ENCODE measurements at regions of chr17 and their contacts with region 1.

Region 1: DNA sequence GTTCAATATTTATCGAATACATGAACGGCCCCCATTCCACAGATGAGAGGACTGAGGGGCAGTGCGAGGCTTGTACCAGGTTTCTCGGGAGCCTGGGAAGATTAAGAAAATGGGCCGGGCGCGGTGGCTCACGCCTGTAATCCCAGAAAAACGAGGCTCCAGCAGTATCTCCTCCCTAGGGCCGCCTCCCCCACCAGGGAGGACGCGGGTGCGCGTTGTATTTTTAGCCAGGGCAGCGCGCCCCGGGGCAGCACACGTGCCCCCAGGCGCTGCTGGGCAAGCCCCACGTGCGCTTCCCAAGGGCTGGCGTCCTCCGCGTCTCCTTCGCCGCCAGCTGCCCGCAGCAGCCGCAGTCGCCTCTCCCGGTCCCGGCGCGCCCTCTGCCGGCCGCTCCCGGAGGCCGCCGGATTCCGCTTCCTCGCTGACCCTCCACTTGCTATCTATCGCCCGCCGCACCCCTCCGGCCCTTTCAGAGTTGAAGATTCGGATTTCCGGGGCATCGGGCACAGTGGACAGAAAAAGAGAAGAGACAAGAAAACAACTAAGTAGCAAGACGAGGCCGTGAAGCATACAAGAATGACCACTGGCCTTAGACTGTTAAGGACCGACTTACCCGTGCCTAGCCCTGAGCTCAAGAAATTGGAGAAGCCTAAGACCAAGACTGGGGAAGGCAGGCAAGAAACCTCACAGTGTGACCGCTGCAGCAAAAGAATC is 1.9 kb upstream of the YBX2 start:
- DNase-seq: peak in 7 of 9 experiments; percentile 54 to 82 (median 75)
- ATAC-seq: no peak
- H3K4me3 ChIP-seq: no peak overlapping the region
- H3K4me3 Mint-ChIP-seq: peak overlapping the region; percentile 75
- H3K27ac ChIP-seq: no peak overlapping the region
- H3K27ac Mint-ChIP-seq: no peak overlapping the region
- H3K4me1 ChIP-seq: peaks cover 25% of the 10 kb centered on the region
- H3K4me1 Mint-ChIP-seq: peaks cover 19% of the 10 kb centered on the region
- H3K27me3 ChIP-seq: peaks cover 0 to 15% of the 10 kb centered on the region in 2 experiments
- H3K27me3 Mint-ChIP-seq: peaks cover 9% of the 10 kb centered on the region
- CTCF ChIP-seq: peak; percentile 89

Region 2: DNA sequence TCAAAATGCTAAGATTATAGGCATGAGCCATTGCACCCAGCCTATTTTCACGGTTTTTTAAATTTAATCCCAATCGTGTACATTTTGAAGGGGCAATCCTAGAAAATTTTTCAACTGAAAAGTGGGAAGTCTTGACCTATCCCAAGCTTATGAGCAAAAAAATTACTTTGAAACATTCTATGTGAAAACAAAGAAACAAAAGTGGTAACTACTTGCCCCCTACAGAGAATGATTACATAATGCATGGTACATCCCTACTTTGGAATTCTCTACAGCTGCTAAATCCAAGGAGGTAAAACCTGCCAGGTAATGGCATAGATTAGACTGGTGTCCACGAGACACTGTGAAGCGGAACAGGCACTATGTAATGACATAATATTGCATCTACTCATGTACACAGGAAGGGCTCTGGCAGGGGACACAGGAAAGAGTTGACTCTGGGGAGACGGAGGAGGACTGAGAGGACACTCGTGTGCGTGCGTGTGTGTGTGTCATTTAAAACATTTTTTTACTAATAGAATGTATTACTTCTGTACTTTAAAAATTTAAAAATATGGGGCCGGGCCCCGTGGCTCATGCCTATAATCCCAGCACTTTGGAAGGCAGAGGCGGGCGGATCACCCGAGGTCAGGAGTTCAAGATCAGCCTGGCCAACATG is 197.4 kb before region 1 on chr17:
- CTCF ChIA-PET with region 1: no interaction called
- POLR2A ChIA-PET with region 1: no interaction called
- intact Hi-C with region 1: no loop called
- DNase-seq: no peak
- ATAC-seq: no peak
- H3K4me3 ChIP-seq: no peak overlapping the region
- H3K4me3 Mint-ChIP-seq: no peak overlapping the region
- H3K27ac ChIP-seq: no peak overlapping the region
- H3K27ac Mint-ChIP-seq: no peak overlapping the region
- H3K4me1 ChIP-seq: no peaks in the 10 kb centered on the region
- H3K4me1 Mint-ChIP-seq: peaks cover 11% of the 10 kb centered on the region
- H3K27me3 ChIP-seq: peaks cover 0 to 3% of the 10 kb centered on the region in 2 experiments
- H3K27me3 Mint-ChIP-seq: peaks cover 19% of the 10 kb centered on the region
- CTCF ChIP-seq: no peak

Region 3: GRCh38 chr17:7219812-7220581 is 76.3 kb before region 1 on chr17 and contains the starts of genes ACADVL and DLG4:
- CTCF ChIA-PET with region 1: interaction called, 35 read pairs
- POLR2A ChIA-PET with region 1: no interaction called
- intact Hi-C with region 1: loop called in 1 of 2 experiments (anchors 2 kb)
- DNase-seq: peak in 8 of 9 experiments; percentile 67 to 86 (median 82)
- ATAC-seq: peak; percentile 54
- H3K4me3 ChIP-seq: peak within 1 kb of the TSS; percentile 74 to 97
- H3K4me3 Mint-ChIP-seq: peak within 1 kb of the TSS; percentile 91
- H3K27ac ChIP-seq: peak within 1 kb of the TSS; percentile 35 to 86
- H3K27ac Mint-ChIP-seq: peak within 1 kb of the TSS; percentile 94
- H3K4me1 ChIP-seq: peaks cover 52% of the 10 kb centered on the region
- H3K4me1 Mint-ChIP-seq: peaks cover 55% of the 10 kb centered on the region
- H3K27me3 ChIP-seq: no peaks in the 10 kb centered on the region
- H3K27me3 Mint-ChIP-seq: no peaks in the 10 kb centered on the region
- CTCF ChIP-seq: no peak
- total RNA-seq, gene ACADVL: 264 to 275 TPM
- total RNA-seq, gene DLG4: 5.8 to 8.1 TPM

Region 4: GRCh38 chr17:7252176-7253043 is 43.9 kb before region 1 on chr17 and contains the start of gene ELP5:
- CTCF ChIA-PET with region 1: interaction called, 3 read pairs
- POLR2A ChIA-PET with region 1: interaction called, 3 read pairs
- intact Hi-C with region 1: loop called in 1 of 2 experiments (anchors 1 kb)
- DNase-seq: peak; percentile 73 to 99 (median 87)
- ATAC-seq: peak; percentile 48
- H3K4me3 ChIP-seq: peak within 1 kb of the TSS; percentile 81 to 92
- H3K4me3 Mint-ChIP-seq: peak within 1 kb of the TSS; percentile 97
- H3K27ac ChIP-seq: peak within 1 kb of the TSS; percentile 99
- H3K27ac Mint-ChIP-seq: peak within 1 kb of the TSS; percentile 100
- H3K4me1 ChIP-seq: peaks cover 31% of the 10 kb centered on the region
- H3K4me1 Mint-ChIP-seq: peaks cover 44% of the 10 kb centered on the region
- H3K27me3 ChIP-seq: no peaks in the 10 kb centered on the region
- H3K27me3 Mint-ChIP-seq: no peaks in the 10 kb centered on the region
- CTCF ChIP-seq: no peak
- total RNA-seq, gene ELP5: 38.9 to 39.0 TPM

Region 5: DNA sequence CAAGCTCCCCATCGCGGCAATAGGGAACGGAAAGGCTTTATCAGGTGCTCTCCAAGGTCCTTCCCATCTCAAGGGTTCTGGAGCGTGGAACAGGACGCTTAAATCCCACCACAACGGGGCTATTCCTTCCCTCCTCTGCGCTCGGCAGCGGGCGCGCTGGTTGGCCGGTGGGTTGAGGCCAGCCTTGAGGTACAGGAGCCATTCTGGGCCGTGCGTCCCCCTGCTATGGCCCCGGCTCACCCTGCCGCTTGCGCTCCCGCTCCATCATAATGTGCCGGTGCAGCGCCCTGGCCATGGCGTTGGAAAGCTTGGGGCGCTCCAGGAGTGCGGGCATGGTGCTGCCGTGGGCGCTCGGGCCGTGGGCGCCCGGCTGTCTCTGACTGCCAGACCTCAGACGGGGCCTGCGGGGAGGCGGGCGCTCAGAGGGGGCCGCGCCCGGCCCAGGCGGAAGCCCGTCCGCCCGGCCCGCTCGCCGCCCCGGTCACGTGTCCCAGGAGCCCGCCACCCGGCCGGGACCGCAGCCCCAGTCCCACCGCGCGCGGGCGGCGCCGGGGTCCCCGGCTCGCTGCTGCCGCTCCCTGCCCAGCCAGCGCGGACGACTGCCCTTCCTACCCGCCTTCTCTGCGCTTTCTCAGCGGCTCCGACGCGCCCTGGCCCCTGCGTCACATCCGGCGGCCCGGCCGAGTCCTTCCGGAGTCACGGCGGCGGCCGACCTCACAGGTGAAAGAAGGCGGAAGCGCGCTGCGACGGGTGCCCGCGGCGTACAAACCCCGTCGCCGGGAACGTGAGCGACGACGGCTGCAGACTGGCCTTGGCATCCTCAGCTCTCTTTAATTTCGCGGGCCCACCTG is 18.6 kb after region 1 on chr17 and contains the start of gene GPS2:
- CTCF ChIA-PET with region 1: interaction called, 14 read pairs
- POLR2A ChIA-PET with region 1: interaction called, 5 read pairs
- intact Hi-C with region 1: loop called in 1 of 2 experiments (anchors 2 kb)
- DNase-seq: peak; percentile 87 to 97 (median 94)
- ATAC-seq: peak; percentile 78
- H3K4me3 ChIP-seq: peak within 1 kb of the TSS; percentile 77 to 82
- H3K4me3 Mint-ChIP-seq: peak within 1 kb of the TSS; percentile 92
- H3K27ac ChIP-seq: peak within 1 kb of the TSS; percentile 81 to 97
- H3K27ac Mint-ChIP-seq: peak within 1 kb of the TSS; percentile 96
- H3K4me1 ChIP-seq: peaks cover 50% of the 10 kb centered on the region
- H3K4me1 Mint-ChIP-seq: peaks cover 51% of the 10 kb centered on the region
- H3K27me3 ChIP-seq: no peaks in the 10 kb centered on the region
- H3K27me3 Mint-ChIP-seq: no peaks in the 10 kb centered on the region
- CTCF ChIP-seq: no peak
- total RNA-seq, gene GPS2: 128 to 132 TPM

Region 6: GRCh38 chr17:7323731-7324437 is 27.5 kb after region 1 on chr17:
- CTCF ChIA-PET with region 1: interaction called, 11 read pairs
- POLR2A ChIA-PET with region 1: no interaction called
- intact Hi-C with region 1: no loop called
- DNase-seq: peak; percentile 38 to 83 (median 71)
- ATAC-seq: peak; percentile 56
- H3K4me3 ChIP-seq: no peak overlapping the region
- H3K4me3 Mint-ChIP-seq: no peak overlapping the region
- H3K27ac ChIP-seq: no peak overlapping the region
- H3K27ac Mint-ChIP-seq: no peak overlapping the region
- H3K4me1 ChIP-seq: peaks cover 14% of the 10 kb centered on the region
- H3K4me1 Mint-ChIP-seq: peaks cover 14% of the 10 kb centered on the region
- H3K27me3 ChIP-seq: no peaks in the 10 kb centered on the region
- H3K27me3 Mint-ChIP-seq: no peaks in the 10 kb centered on the region
- CTCF ChIP-seq: peak; percentile 86

Region 7: GRCh38 chr17:7336240-7337175 is 40.2 kb after region 1 on chr17 and contains the start of gene ACAP1:
- CTCF ChIA-PET with region 1: interaction called, 16 read pairs
- POLR2A ChIA-PET with region 1: interaction called, 5 read pairs
- intact Hi-C with region 1: no loop called
- DNase-seq: peak; percentile 72 to 93 (median 89)
- ATAC-seq: peak; percentile 98
- H3K4me3 ChIP-seq: peak within 1 kb of the TSS; percentile 74 to 76
- H3K4me3 Mint-ChIP-seq: peak within 1 kb of the TSS; percentile 94
- H3K27ac ChIP-seq: peak within 1 kb of the TSS; percentile 60 to 65
- H3K27ac Mint-ChIP-seq: peak within 1 kb of the TSS; percentile 97
- H3K4me1 ChIP-seq: peaks cover 55% of the 10 kb centered on the region
- H3K4me1 Mint-ChIP-seq: peaks cover 61% of the 10 kb centered on the region
- H3K27me3 ChIP-seq: no peaks in the 10 kb centered on the region
- H3K27me3 Mint-ChIP-seq: no peaks in the 10 kb centered on the region
- CTCF ChIP-seq: no peak
- total RNA-seq, gene ACAP1: 432 to 451 TPM

Measured in CD8-positive, alpha-beta T cell (primary cell).